CD8-positive, alpha-beta T cell (primary cell): ENCODE measurements at regions of chr4 and their contacts with region 1.

Region 1: DNA sequence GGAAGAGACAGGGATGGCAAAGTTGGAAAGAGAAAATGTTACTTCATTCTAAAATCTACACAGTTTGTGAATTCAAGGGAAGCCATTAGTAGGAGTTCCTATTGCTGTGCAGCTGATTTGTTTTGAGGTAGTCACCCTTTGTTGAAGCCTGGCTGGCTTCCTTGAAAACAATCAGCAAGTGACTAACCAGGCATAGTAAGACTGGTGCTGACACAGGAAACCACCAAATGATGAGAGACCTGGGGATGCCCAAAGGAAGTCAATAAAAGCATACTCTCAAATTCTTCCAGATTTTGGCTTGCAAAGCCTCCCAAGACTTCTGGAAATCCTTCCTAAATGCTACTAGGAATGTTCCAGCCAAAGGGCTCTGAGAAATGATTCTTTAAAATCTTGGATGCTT is 23.9 kb upstream of the PRDM8 start:
- DNase-seq: peak in 8 of 9 experiments; percentile 34 to 89 (median 62)
- ATAC-seq: peak; percentile 96
- H3K4me3 ChIP-seq: peak overlapping the region in 1 of 2 experiments; percentile 1
- H3K4me3 Mint-ChIP-seq: peak overlapping the region; percentile 36
- H3K27ac ChIP-seq: peak overlapping the region; percentile 3 to 68
- H3K27ac Mint-ChIP-seq: peak overlapping the region; percentile 95
- H3K4me1 ChIP-seq: peaks cover 33% of the 10 kb centered on the region
- H3K4me1 Mint-ChIP-seq: peaks cover 55% of the 10 kb centered on the region
- H3K27me3 ChIP-seq: no peaks in the 10 kb centered on the region
- H3K27me3 Mint-ChIP-seq: no peaks in the 10 kb centered on the region
- CTCF ChIP-seq: no peak

Region 2: GRCh38 chr4:80092847-80093246 is 80.6 kb before region 1 on chr4:
- CTCF ChIA-PET with region 1: no interaction called
- POLR2A ChIA-PET with region 1: no interaction called
- intact Hi-C with region 1: no loop called
- DNase-seq: no peak
- ATAC-seq: no peak
- H3K4me3 ChIP-seq: no peak overlapping the region
- H3K4me3 Mint-ChIP-seq: no peak overlapping the region
- H3K27ac ChIP-seq: no peak overlapping the region
- H3K27ac Mint-ChIP-seq: no peak overlapping the region
- H3K4me1 ChIP-seq: no peaks in the 10 kb centered on the region
- H3K4me1 Mint-ChIP-seq: no peaks in the 10 kb centered on the region
- H3K27me3 ChIP-seq: no peaks in the 10 kb centered on the region
- H3K27me3 Mint-ChIP-seq: no peaks in the 10 kb centered on the region
- CTCF ChIP-seq: no peak

Region 3: GRCh38 chr4:80138551-80139538 is 34.6 kb before region 1 on chr4:
- CTCF ChIA-PET with region 1: interaction called, 6 read pairs
- POLR2A ChIA-PET with region 1: interaction called, 13 read pairs
- intact Hi-C with region 1: loop called in 1 of 2 experiments (anchors 2 kb)
- DNase-seq: peak in 8 of 9 experiments; percentile 36 to 74 (median 62)
- ATAC-seq: peak; percentile 95
- H3K4me3 ChIP-seq: no peak overlapping the region
- H3K4me3 Mint-ChIP-seq: no peak overlapping the region
- H3K27ac ChIP-seq: peak overlapping the region in 1 of 2 experiments; percentile 21
- H3K27ac Mint-ChIP-seq: peak overlapping the region; percentile 70
- H3K4me1 ChIP-seq: peaks cover 20% of the 10 kb centered on the region
- H3K4me1 Mint-ChIP-seq: peaks cover 46% of the 10 kb centered on the region
- H3K27me3 ChIP-seq: no peaks in the 10 kb centered on the region
- H3K27me3 Mint-ChIP-seq: no peaks in the 10 kb centered on the region
- CTCF ChIP-seq: no peak

Region 4: DNA sequence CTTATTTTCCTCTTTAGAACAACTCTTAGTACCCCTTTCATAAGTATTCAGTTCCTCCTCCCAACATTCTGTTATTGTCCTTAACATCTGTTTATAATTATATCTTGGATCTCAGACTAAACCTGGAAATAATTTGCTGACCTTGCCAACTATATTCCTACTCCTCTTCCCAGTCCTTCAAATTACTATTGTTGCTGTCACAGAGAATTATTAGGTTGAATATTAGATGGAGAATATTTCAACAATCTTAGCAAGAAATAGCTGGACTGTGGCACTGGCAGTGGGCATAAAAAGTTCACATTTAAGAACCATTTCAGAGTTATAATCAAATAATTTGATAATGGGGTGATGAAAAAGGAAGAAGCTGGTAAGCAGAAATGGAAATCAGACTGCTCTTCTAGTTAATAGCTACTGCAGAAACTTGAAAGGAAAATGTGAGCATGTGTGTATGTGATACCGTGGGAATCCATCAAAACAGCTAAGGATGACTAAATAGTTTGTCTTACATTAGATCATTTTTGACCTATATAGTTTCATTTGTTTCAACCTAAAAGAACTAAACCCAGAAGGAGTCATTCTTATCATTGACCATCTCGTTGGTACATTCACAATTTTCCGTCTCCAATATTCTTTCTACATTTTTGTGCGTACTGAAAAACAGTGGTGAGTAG is 19.4 kb before region 1 on chr4:
- CTCF ChIA-PET with region 1: no interaction called
- POLR2A ChIA-PET with region 1: interaction called, 3 read pairs
- intact Hi-C with region 1: loop called in 1 of 2 experiments (anchors 2 kb)
- DNase-seq: no peak
- ATAC-seq: no peak
- H3K4me3 ChIP-seq: no peak overlapping the region
- H3K4me3 Mint-ChIP-seq: no peak overlapping the region
- H3K27ac ChIP-seq: no peak overlapping the region
- H3K27ac Mint-ChIP-seq: no peak overlapping the region
- H3K4me1 ChIP-seq: no peaks in the 10 kb centered on the region
- H3K4me1 Mint-ChIP-seq: no peaks in the 10 kb centered on the region
- H3K27me3 ChIP-seq: no peaks in the 10 kb centered on the region
- H3K27me3 Mint-ChIP-seq: no peaks in the 10 kb centered on the region
- CTCF ChIP-seq: no peak

Region 5: GRCh38 chr4:80161413-80162058 is 11.9 kb before region 1 on chr4:
- CTCF ChIA-PET with region 1: no interaction called
- POLR2A ChIA-PET with region 1: interaction called, 10 read pairs
- intact Hi-C with region 1: loop called in 1 of 2 experiments (anchors 2 kb)
- DNase-seq: no peak
- ATAC-seq: no peak
- H3K4me3 ChIP-seq: no peak overlapping the region
- H3K4me3 Mint-ChIP-seq: no peak overlapping the region
- H3K27ac ChIP-seq: no peak overlapping the region
- H3K27ac Mint-ChIP-seq: no peak overlapping the region
- H3K4me1 ChIP-seq: no peaks in the 10 kb centered on the region
- H3K4me1 Mint-ChIP-seq: no peaks in the 10 kb centered on the region
- H3K27me3 ChIP-seq: no peaks in the 10 kb centered on the region
- H3K27me3 Mint-ChIP-seq: no peaks in the 10 kb centered on the region
- CTCF ChIP-seq: no peak